HCT116 (cell line): ENCODE measurements at regions of chr3 and their contacts with region 1.

Region 1: DNA sequence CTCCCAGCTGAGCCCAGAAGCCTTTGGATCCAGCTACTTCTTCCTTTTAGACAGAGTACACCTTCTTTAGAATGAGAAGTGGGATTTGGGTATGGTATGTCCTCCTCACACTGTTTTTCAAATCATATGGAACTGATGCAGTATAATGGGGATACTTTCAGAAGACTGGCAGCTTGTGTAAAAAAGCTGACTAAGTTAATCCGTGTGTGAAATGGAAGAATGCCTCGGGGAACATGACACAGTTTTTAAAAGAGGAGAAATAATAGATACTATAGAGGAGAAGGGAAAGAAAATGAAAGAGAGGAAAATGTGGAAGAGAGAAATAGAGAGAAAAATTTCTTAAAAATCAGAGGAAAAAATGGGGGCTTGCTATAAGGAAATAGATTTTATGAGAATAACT is 47.7 kb downstream of the TUSC7 start:
- DNase-seq: no peak
- ATAC-seq: no peak
- H3K4me3 ChIP-seq: no peak overlapping the region
- H3K27ac ChIP-seq: no peak overlapping the region
- H3K4me1 ChIP-seq: no peaks in the 10 kb centered on the region
- H3K27me3 ChIP-seq: no peaks in the 10 kb centered on the region; the same call in 1 of the 2 replicates
- CTCF ChIP-seq: no peak
- POLR2A ChIP-seq: no peak
- RAD21 ChIP-seq: no peak

Region 2: DNA sequence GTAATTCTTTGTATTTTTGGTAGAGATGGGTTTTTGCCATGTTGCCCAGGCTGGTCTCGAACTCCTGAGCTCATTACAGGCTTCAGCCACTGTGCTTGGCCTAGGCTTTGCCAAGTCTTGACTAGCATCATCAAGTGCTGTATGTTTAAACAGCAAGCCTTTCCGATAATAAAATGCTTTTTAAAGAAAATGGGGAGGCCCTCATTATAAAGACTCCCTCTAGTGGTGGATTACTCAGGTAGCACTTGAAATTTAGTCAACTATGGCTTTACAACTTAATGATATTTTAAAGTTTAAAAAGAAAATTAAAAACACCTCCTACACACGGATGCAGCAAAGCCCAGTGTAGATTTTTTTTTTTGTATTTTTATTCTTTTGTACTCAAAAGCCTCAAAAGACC is 920.4 kb before region 1 on chr3:
- CTCF ChIA-PET with region 1: no interaction called
- POLR2A ChIA-PET with region 1: no interaction called
- RAD21 ChIA-PET with region 1: no interaction called
- intact Hi-C with region 1: loop called (anchors 10 kb)
- DNase-seq: peak; percentile 28
- ATAC-seq: peak; percentile 69
- H3K4me3 ChIP-seq: no peak overlapping the region
- H3K27ac ChIP-seq: no peak overlapping the region
- H3K4me1 ChIP-seq: no peaks in the 10 kb centered on the region
- H3K27me3 ChIP-seq: no peaks in the 10 kb centered on the region
- CTCF ChIP-seq: peak; percentile 28 to 74 (median 68); a peak in 5 of 6 replicates
- POLR2A ChIP-seq: no peak
- RAD21 ChIP-seq: peak; percentile 20; the same call in 1 of the 2 replicates

Region 3: DNA sequence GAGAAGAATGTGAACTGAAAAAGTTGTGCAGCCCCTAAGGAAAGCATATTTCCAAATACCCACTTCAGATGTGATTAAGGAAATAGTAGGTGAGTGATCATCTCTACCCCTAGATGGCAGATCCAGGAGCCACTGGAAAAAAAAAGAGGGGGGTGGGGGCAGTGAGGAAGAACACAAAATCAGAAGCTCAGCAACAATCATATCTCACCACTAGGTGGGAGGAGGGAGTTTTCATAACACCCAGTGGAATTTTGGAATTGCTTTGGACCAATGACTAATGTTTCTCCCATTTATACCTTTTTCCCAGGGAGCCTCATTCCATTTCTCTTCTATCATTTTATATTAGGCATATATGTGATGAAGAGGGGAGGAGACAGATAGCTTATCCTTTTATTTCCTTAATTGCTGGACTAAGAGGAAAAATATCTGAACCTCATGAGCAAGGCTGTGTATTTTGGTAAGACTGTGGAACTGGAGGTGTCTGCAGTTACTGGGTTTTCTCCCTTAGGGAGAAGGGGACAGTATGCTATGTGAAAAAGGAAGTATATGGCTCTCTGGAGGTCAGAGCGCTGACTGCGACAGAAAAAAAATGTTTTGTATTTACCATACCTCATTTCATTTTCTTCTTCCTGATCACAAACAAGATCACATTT is 770.6 kb before region 1 on chr3:
- CTCF ChIA-PET with region 1: no interaction called
- POLR2A ChIA-PET with region 1: no interaction called
- RAD21 ChIA-PET with region 1: no interaction called
- intact Hi-C with region 1: loop called (anchors 10 kb)
- DNase-seq: peak; percentile 62
- ATAC-seq: peak; percentile 86
- H3K4me3 ChIP-seq: no peak overlapping the region
- H3K27ac ChIP-seq: no peak overlapping the region
- H3K4me1 ChIP-seq: no peaks in the 10 kb centered on the region
- H3K27me3 ChIP-seq: peaks cover 5% of the 10 kb centered on the region; the same call in 1 of the 2 replicates
- CTCF ChIP-seq: peak; percentile 67 to 73 (median 72)
- POLR2A ChIP-seq: no peak
- RAD21 ChIP-seq: peak; percentile 64

Region 4: DNA sequence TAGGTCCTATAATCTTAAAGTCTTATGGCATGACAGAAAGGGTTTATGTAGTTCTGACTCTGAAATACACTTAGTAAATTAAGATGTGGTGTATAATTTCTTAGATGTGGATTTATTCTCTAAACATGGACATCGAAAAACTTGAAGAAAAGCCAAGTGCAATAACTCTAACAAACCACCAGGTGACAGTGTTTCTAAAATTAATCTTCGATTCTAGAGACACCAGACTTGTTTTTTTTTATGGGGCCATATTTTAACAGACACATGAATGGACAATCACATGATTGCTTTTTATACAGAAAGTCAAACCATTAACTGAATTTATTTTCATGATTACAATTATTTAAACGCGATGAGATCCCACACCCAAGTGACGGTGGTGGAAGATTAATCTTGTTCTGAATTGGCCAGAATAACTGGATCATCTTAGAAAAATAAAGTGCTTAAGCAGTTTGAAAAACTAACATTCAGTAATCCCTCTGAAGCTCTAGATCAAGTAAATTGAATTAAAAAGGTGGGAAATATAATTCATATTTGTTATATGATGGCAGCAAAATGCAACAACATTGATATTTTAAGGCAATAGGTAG is 617.1 kb before region 1 on chr3:
- CTCF ChIA-PET with region 1: no interaction called
- POLR2A ChIA-PET with region 1: no interaction called
- RAD21 ChIA-PET with region 1: no interaction called
- intact Hi-C with region 1: loop called (anchors 1 kb)
- DNase-seq: peak; percentile 12
- ATAC-seq: no peak
- H3K4me3 ChIP-seq: no peak overlapping the region
- H3K27ac ChIP-seq: no peak overlapping the region
- H3K4me1 ChIP-seq: no peaks in the 10 kb centered on the region
- H3K27me3 ChIP-seq: no peaks in the 10 kb centered on the region
- CTCF ChIP-seq: peak; percentile 47 to 93 (median 66); a peak in 5 of 6 replicates
- POLR2A ChIP-seq: no peak
- RAD21 ChIP-seq: peak; percentile 63

Region 5: DNA sequence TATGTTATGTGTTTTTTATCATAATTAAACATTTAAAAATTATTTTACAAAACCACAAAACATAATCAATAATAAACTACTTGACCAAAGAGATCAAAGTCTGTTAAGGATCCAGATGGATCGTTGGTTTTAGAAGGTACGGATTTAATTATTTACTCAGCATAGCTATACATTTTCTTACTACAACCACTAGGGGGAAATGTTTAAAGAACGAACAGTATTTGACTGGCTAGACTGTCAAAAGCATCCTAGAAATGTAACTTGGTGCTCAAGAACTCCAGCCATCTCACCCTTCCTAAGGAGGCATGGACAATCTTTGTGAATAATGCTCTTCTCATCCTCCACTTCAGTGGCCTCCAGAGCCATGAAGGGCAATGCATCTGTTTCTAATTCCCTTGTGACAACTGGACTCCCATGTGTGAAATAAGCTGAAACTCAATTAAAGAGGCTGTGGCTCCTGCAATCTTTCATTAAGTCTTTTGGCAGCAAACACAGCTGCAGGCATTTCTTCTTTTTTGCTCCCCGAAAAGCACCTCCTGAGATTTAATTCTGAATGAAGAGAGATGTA is 142.4 kb before region 1 on chr3:
- CTCF ChIA-PET with region 1: no interaction called
- POLR2A ChIA-PET with region 1: no interaction called
- RAD21 ChIA-PET with region 1: no interaction called
- intact Hi-C with region 1: loop called (anchors 10 kb)
- DNase-seq: no peak
- ATAC-seq: peak; percentile 63; the same call in 1 of the 2 replicates
- H3K4me3 ChIP-seq: no peak overlapping the region
- H3K27ac ChIP-seq: no peak overlapping the region
- H3K4me1 ChIP-seq: no peaks in the 10 kb centered on the region
- H3K27me3 ChIP-seq: no peaks in the 10 kb centered on the region
- CTCF ChIP-seq: peak in 2 of 3 experiments; percentile 29 to 46; a peak in 3 of 6 replicates
- POLR2A ChIP-seq: no peak
- RAD21 ChIP-seq: no peak